Ascending aorta (tissue), 2 donors: ENCODE measurements at regions of chr1 and their contacts with region 1.

Region 1: GRCh38 chr1:37474046-37474759 is at the start of gene ZC3H12A:
- DNase-seq: peak; percentile 78 to 96
- H3K4me3 ChIP-seq: peak within 1 kb of the TSS; percentile 81 to 95
- H3K27ac ChIP-seq: peak within 1 kb of the TSS; percentile 99
- H3K4me1 ChIP-seq: peaks cover 42 to 69% of the 10 kb centered on the region in 2 donors
- H3K27me3 ChIP-seq: no peaks in the 10 kb centered on the region
- CTCF ChIP-seq: no peak
- total RNA-seq, gene ZC3H12A: 12.8 TPM

Region 2: GRCh38 chr1:37372302-37372701 is 101.9 kb before region 1 on chr1:
- intact Hi-C with region 1: no loop called
- DNase-seq: no peak
- H3K4me3 ChIP-seq: no peak overlapping the region
- H3K27ac ChIP-seq: no peak overlapping the region
- H3K4me1 ChIP-seq: no peaks in the 10 kb centered on the region
- H3K27me3 ChIP-seq: no peaks in the 10 kb centered on the region
- CTCF ChIP-seq: no peak

Region 3: DNA sequence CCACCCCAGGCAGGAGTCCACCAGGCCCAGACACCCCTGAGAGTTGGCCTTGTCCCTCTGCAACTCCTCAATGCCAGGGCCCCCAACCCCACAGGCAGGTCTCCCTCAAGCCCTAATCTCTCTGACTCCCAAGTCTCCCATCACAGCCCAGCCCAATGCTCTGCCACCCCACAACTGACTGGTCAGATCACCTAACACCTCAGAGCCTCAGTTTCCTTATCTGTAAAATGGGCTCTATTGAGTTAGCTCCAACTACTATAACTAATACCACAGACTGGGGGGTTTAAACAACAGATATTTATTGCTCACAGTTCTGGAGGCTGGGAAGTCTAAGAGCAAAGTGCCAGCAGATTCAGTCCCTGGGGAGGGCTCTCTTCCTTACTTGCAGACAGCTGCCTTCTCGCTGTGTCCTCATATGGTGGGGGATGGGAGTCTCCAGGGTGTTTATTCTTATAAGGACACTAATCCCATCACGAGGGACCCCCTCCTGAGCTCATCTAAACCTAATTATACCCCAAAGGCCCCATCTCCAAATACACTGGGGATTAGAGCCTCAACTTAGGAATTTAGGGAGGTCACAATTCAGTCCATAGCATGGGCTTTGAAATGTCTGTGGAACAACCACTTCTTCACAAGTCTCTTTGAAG is 34.7 kb before region 1 on chr1:
- intact Hi-C with region 1: no loop called
- DNase-seq: no peak
- H3K4me3 ChIP-seq: no peak overlapping the region
- H3K27ac ChIP-seq: no peak overlapping the region
- H3K4me1 ChIP-seq: no peaks in the 10 kb centered on the region
- H3K27me3 ChIP-seq: no peaks in the 10 kb centered on the region
- CTCF ChIP-seq: no peak

Region 4: GRCh38 chr1:37455516-37455915 is 18.7 kb before region 1 on chr1:
- intact Hi-C with region 1: loop called (anchors 1 kb)
- DNase-seq: no peak
- H3K4me3 ChIP-seq: peak overlapping the region in 1 of 2 donors; percentile 47
- H3K27ac ChIP-seq: peak overlapping the region; percentile 68 to 72
- H3K4me1 ChIP-seq: no peaks in the 10 kb centered on the region
- H3K27me3 ChIP-seq: no peaks in the 10 kb centered on the region
- CTCF ChIP-seq: no peak

Region 5: GRCh38 chr1:37514350-37515184 is 40.4 kb after region 1 on chr1 and contains the start of gene MEAF6:
- intact Hi-C with region 1: loop called (anchors 1 kb)
- DNase-seq: peak; percentile 12 to 91
- H3K4me3 ChIP-seq: peak within 1 kb of the TSS; percentile 92 to 99
- H3K27ac ChIP-seq: peak within 1 kb of the TSS; percentile 92 to 99
- H3K4me1 ChIP-seq: peaks cover 8 to 24% of the 10 kb centered on the region in 2 donors
- H3K27me3 ChIP-seq: no peaks in the 10 kb centered on the region
- CTCF ChIP-seq: peak; percentile 20 to 84 (median 48)
- total RNA-seq, gene MEAF6: 12.3 TPM

Region 6: GRCh38 chr1:37595440-37596319 is 121.5 kb after region 1 on chr1 and contains the start of gene GNL2:
- intact Hi-C with region 1: loop called (anchors 5 kb)
- DNase-seq: peak; percentile 86 to 98
- H3K4me3 ChIP-seq: peak within 1 kb of the TSS; percentile 78 to 80
- H3K27ac ChIP-seq: peak within 1 kb of the TSS; percentile 81 to 82
- H3K4me1 ChIP-seq: peaks cover 5 to 15% of the 10 kb centered on the region in 2 donors
- H3K27me3 ChIP-seq: no peaks in the 10 kb centered on the region
- CTCF ChIP-seq: no peak
- total RNA-seq, gene GNL2: 17.0 TPM